ENCODE measurements at regions of chr4 and their contacts with region 1.

Region 1: DNA sequence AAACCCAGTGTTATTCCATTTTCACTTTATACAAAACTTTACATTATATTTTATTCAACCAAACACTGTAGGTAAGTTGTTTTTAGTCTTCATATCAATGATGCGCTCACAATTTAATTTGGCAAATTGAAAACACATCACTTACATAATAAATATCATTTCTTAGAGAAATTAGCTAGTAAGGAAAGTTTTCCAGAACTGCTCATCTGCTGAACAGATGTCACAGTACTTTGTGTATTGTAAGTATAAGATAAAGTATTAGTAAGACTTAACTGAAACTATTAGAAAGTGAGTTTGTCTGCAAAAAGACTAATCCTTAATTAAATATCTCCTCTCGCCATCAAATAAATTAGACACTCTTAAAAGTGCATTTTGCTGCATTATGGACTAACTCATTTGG is 108.7 kb upstream of the PACRGL start:
- DNase-seq: no peak
- H3K4me3 ChIP-seq: no peak overlapping the region
- H3K27ac ChIP-seq: no peak overlapping the region
- H3K4me1 ChIP-seq: no peaks in the 10 kb centered on the region
- H3K27me3 ChIP-seq: no peaks in the 10 kb centered on the region
- CTCF ChIP-seq: no peak

Region 2: DNA sequence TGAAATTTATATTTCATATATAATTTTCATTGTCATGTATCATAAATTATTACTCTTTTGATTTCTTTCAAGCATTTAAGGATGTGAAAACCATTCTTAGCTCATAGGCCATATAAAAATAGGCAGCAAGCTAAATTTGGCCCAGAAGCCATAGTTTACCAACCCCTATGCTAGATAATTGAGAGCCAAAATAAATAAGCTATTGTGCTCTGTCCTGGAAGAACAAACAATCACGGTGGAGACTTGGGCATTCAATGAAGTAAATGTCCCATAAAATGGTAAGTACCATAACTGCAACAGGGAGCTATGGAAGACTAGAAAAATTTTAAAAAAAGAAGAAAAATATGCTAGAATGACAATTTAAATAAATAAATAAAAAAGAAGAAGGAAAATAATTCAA is 47.8 kb after region 1 on chr4:
- CTCF ChIA-PET with region 1: interaction called, 14 read pairs
- POLR2A ChIA-PET with region 1: no interaction called
- intact Hi-C with region 1: no loop called
- DNase-seq: no peak
- H3K4me3 ChIP-seq: no peak overlapping the region
- H3K27ac ChIP-seq: no peak overlapping the region
- H3K4me1 ChIP-seq: no peaks in the 10 kb centered on the region
- H3K27me3 ChIP-seq: no peaks in the 10 kb centered on the region
- CTCF ChIP-seq: no peak

Measured in PC-9 (cell line).